PC-3 (cell line): ENCODE measurements at regions of chr18 and their contacts with region 1.

Region 1: GRCh38 chr18:41553716-41554115 is 401.3 kb upstream of the PIK3C3 start:
- DNase-seq: no peak
- ATAC-seq: no peak
- H3K4me3 ChIP-seq: no peak overlapping the region
- H3K27ac ChIP-seq: no peak overlapping the region
- H3K4me1 ChIP-seq: no peaks in the 10 kb centered on the region
- H3K27me3 ChIP-seq: no peaks in the 10 kb centered on the region
- CTCF ChIP-seq: no peak

Region 2: DNA sequence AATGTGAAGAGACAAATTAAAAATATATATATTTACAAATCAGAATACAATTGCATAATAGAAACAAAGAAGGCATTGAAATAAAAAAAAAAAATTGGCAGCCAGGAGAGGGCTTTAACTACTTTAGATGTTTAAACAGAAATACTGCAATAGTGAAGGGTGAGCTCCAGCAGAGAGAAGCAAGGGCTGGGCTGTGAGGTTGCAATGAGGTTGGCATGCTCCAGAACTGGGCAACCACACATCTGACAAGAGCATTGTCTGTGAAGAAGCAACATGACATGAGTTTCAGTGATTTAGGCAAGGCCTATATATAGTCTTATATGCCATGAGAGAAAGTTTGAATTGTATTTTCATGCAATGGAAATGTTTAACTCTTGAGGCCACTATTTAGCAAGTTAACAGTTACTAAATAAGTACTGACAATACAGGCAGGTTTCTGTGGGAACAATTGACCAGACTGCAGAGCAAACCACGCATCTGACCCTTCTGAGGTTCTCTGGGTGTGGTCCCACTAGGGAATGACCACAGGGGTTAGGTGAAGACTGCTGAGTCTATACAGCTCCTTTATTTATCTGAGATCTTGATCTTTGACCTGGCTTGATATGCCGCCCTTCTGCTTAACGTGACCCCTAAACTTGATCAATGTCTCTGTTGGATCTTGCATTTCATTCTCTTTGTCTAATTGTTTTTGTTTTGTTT is 47.1 kb after region 1 on chr18:
- CTCF ChIA-PET with region 1: no interaction called
- POLR2A ChIA-PET with region 1: interaction called, 10 read pairs
- intact Hi-C with region 1: no loop called
- DNase-seq: no peak
- ATAC-seq: peak; percentile 56; the same call in 1 of the 2 replicates
- H3K4me3 ChIP-seq: no peak overlapping the region
- H3K27ac ChIP-seq: no peak overlapping the region
- H3K4me1 ChIP-seq: no peaks in the 10 kb centered on the region
- H3K27me3 ChIP-seq: no peaks in the 10 kb centered on the region
- CTCF ChIP-seq: no peak